ENCODE measurements at regions of chr19 and their contacts with region 1.

Region 1: DNA sequence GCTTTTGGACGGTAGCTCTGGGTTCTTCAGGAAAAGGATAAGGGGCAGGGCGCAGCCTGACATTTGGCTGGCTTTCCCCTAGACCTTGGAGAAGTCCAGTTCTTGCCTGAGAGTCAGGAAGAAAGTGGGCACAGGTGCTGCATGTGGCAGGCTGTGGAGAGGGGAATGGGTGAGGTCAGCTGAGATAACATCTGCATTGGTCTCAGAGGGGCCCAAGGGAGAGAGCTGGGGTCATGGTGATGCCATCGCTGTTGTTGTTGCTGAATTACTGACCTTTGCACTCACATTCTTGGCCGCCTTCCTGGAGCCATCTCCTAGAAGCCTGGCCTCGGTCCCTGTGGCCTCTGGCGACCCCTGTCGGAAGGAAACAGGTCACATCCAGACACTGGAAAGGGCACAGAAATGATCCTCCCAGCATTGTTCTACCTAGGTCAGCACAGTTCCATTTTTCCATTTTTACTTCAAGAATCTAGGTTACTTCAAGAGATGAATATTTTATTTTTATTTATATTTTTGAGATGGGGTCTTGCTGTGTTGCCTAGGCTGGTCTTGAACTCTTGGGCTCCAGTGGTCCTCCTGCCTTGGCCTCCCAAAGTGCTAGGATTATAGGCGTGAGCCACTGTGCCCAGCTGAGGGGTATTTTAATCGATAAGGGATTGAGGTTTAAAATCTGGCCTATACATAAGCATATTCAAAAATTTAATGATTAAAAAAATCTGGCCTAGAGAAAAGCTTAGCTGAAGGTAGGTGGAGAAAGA is 6.5 kb upstream of the LIPE start:
- DNase-seq: no peak
- ATAC-seq: peak; percentile 97
- H3K4me3 ChIP-seq: no peak overlapping the region
- H3K27ac ChIP-seq: no peak overlapping the region
- H3K4me1 ChIP-seq: no peaks in the 10 kb centered on the region
- H3K27me3 ChIP-seq: no peaks in the 10 kb centered on the region
- CTCF ChIP-seq: peak; percentile 91 to 95 (median 93)
- EP300 ChIP-seq: no peak
- POLR2A ChIP-seq: no peak
- RAD21 ChIP-seq: peak; percentile 83

Region 2: DNA sequence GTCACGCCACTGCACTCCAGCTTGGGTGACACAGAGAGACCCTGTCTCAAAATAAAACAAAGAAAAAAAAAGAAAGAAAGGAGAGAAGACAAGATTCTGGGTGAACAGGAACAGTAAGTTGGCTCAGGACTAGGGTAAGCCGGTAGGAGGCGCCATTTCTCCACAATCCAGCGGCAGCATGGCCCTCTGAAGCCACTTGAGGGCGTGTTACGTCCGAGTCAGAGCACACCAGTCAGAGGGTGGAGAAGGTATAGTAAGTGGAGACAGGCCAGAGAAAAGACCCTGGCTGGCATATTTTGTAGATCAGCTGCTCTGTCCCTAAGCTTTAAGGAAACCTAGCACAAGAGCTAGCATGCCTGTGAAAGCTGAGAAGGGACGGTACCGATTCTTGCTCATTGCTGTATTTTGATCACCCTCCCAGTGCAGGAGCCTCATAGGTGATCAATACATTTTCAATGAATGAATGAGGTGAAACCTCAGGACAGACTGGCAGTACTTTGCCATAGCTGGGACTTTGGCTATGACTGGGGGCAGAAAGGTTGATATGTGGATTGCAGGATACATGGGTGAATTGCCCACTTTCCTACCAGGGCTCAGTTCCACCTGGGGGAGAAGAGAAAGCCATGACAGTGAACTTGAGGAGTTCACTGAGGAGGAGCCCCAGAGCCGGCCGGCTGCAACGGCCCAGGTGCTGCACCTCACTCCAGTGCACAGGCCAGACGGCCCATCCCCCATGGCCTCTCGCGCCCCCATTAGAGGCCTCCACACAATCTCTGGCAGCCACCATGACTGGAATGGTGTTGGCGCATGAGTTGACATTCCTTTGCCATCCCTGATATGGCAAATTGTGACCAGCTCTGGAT is 324.9 kb before region 1 on chr19:
- CTCF ChIA-PET with region 1: interaction called, 5 read pairs
- POLR2A ChIA-PET with region 1: no interaction called
- RAD21 ChIA-PET with region 1: interaction called, 4 read pairs
- SMC1A ChIA-PET with region 1: no interaction called
- in situ Hi-C with region 1: no loop called
- intact Hi-C with region 1: loop called (anchors 10 kb)
- DNase-seq: peak; percentile 72
- ATAC-seq: peak; percentile 99
- H3K4me3 ChIP-seq: no peak overlapping the region
- H3K27ac ChIP-seq: no peak overlapping the region
- H3K4me1 ChIP-seq: peaks cover 31% of the 10 kb centered on the region
- H3K27me3 ChIP-seq: no peaks in the 10 kb centered on the region
- CTCF ChIP-seq: peak; percentile 100; a peak in 5 of 6 replicates
- EP300 ChIP-seq: no peak; a peak in 1 of 4 replicates
- POLR2A ChIP-seq: no peak
- RAD21 ChIP-seq: peak; percentile 100

Region 3: DNA sequence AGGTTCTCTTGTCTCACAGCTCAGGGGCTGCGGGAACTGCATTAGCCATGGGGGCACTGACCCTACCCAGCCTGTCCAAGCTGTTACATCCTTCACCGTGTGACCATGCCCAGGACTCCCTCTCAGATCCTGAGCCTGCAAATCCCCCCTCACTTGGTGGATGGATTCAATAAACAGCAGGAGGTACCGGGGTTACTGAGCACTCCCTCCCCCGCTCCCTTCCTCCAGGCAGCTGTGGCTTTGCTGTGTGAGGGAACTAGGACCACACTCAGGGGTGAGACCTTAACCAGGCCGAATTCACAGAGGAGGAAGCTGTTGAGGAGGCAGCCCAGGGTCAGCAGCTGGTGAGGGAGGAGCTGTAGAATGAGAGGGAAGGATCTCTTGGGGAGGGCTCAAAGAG is 121.6 kb after region 1 on chr19:
- CTCF ChIA-PET with region 1: no interaction called
- POLR2A ChIA-PET with region 1: no interaction called
- RAD21 ChIA-PET with region 1: no interaction called
- SMC1A ChIA-PET with region 1: no interaction called
- in situ Hi-C with region 1: no loop called
- intact Hi-C with region 1: no loop called
- DNase-seq: no peak
- ATAC-seq: no peak
- H3K4me3 ChIP-seq: no peak overlapping the region
- H3K27ac ChIP-seq: no peak overlapping the region
- H3K4me1 ChIP-seq: no peaks in the 10 kb centered on the region
- H3K27me3 ChIP-seq: peaks cover 3 to 6% of the 10 kb centered on the region in 2 experiments; a peak in 2 of 4 replicates
- CTCF ChIP-seq: no peak
- EP300 ChIP-seq: no peak
- POLR2A ChIP-seq: no peak
- RAD21 ChIP-seq: no peak

Region 4: GRCh38 chr19:42596391-42597072 is 162.8 kb after region 1 on chr19:
- CTCF ChIA-PET with region 1: interaction called, 10 read pairs
- POLR2A ChIA-PET with region 1: no interaction called
- RAD21 ChIA-PET with region 1: no interaction called
- SMC1A ChIA-PET with region 1: no interaction called
- in situ Hi-C with region 1: no loop called
- intact Hi-C with region 1: no loop called
- DNase-seq: no peak
- ATAC-seq: peak; percentile 83
- H3K4me3 ChIP-seq: no peak overlapping the region
- H3K27ac ChIP-seq: no peak overlapping the region
- H3K4me1 ChIP-seq: no peaks in the 10 kb centered on the region
- H3K27me3 ChIP-seq: peaks cover 0 to 4% of the 10 kb centered on the region in 2 experiments; a peak in 1 of 4 replicates
- CTCF ChIP-seq: peak; percentile 80 to 96 (median 91)
- EP300 ChIP-seq: no peak
- POLR2A ChIP-seq: no peak
- RAD21 ChIP-seq: peak; percentile 57

Measured in GM12878 (cell line).